Activated CD4-positive, alpha-beta memory T cell treated with anti-CD3 and anti-CD28 coated beads for 36 hours (primary cell): ENCODE measurements at regions of chr21 and their contacts with region 1.

Region 1: DNA sequence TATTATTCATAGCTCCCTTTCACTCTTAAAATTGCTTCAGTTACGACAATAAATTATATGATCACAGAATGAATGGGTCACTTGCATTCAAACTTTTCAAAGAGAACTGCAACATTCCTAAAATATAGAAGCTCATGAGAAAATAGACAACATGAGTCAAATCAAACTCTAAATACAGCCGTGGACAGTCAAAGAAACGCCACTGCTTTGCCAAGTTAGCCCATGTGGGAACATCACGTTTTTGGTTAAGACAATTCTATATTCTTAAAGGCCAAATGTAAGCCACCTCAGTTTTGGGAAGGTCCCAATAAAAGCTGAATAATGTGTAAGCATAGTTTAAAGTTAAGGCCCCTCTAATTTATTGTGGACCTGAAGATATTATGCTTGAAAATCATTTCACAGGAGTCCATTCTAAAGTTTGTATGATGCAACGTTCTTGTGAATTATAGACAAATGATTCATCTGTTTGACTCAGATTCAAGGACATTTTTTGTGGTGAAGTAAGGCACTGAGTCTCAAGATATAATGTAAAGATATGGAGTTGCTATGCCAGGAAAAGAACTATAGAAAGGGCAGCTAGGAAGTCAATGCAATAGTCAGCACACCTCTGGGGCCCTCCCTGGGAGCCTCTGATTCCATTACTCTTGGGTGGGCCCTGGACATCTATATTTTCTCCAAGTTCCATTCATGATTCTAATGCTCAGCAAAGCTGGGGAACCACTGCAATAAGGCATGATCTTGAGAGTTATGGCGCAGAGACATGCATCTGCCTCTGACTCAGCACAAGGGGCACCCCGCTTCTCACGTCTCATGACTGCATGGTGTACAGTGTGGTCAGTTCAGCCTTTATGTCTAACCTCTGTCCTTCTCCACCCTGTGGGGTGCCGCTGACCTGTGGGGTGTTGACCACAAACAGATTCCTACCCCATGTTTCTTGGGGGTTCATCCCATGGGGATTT is 33.9 kb downstream of the ETS2 start:
- DNase-seq: peak; percentile 46
- H3K4me3 Mint-ChIP-seq: no peak overlapping the region
- H3K27ac Mint-ChIP-seq: no peak overlapping the region
- H3K4me1 Mint-ChIP-seq: peaks cover 27% of the 10 kb centered on the region
- H3K27me3 Mint-ChIP-seq: peaks cover 6% of the 10 kb centered on the region

Region 2: DNA sequence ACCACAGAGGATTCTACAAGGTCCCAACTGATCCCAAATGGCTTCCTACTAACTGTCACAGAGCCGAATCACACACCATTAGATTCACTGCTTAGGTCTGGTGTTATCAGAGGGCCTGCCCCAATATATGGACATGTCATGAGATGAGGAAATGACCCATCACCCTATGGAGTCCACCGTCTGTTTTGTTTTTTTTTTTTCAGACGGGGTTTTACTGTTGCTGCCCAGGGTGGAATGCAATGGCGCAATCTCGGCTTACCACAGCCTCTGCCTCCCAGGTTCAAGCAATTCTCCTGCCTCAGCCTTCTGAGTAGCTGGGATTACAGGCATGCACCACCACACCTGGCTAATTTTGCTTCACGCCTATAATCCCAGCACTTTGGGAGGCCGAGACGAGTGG is 117.6 kb before region 1 on chr21:
- CTCF ChIA-PET with region 1: no interaction called
- POLR2A ChIA-PET with region 1: no interaction called
- intact Hi-C with region 1: no loop called
- DNase-seq: no peak
- H3K4me3 Mint-ChIP-seq: no peak overlapping the region
- H3K27ac Mint-ChIP-seq: no peak overlapping the region
- H3K4me1 Mint-ChIP-seq: no peaks in the 10 kb centered on the region
- H3K27me3 Mint-ChIP-seq: peaks cover 1% of the 10 kb centered on the region

Region 3: GRCh38 chr21:38853421-38853919 is 13.9 kb after region 1 on chr21:
- CTCF ChIA-PET with region 1: no interaction called
- POLR2A ChIA-PET with region 1: no interaction called
- intact Hi-C with region 1: no loop called
- DNase-seq: no peak
- H3K4me3 Mint-ChIP-seq: no peak overlapping the region
- H3K27ac Mint-ChIP-seq: no peak overlapping the region
- H3K4me1 Mint-ChIP-seq: no peaks in the 10 kb centered on the region
- H3K27me3 Mint-ChIP-seq: peaks cover 12% of the 10 kb centered on the region

Region 4: GRCh38 chr21:39000496-39000895 is 160.9 kb after region 1 on chr21:
- CTCF ChIA-PET with region 1: no interaction called
- POLR2A ChIA-PET with region 1: no interaction called
- intact Hi-C with region 1: loop called (anchors 2 kb)
- DNase-seq: peak; percentile 63
- H3K4me3 Mint-ChIP-seq: no peak overlapping the region
- H3K27ac Mint-ChIP-seq: no peak overlapping the region
- H3K4me1 Mint-ChIP-seq: peaks cover 15% of the 10 kb centered on the region
- H3K27me3 Mint-ChIP-seq: peaks cover 11% of the 10 kb centered on the region